Aorta (tissue), 5 donors: ENCODE measurements at regions of chr9 and their contacts with region 1.

Region 1: DNA sequence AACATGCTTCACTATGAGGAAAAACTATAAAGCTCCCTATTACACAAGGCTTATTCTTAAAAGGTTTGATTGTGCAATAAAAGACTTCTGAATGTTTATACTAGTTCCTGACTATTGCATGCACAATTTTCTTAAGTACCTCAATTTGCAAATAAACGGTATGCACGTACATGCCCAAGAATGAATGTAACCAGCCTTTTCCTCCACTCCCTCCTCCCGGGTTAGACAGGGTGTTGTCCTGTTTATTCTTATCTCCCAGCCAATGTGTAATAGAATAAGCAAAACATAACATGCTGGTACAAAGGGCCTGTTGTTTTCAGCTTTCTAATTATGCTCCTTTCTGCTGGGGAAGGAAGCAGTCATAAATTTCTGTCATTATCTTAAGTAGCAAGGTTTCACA is 79.1 kb downstream of the AOPEP start:
- DNase-seq: no peak
- ATAC-seq: peak; percentile 34
- H3K4me3 ChIP-seq: no peak overlapping the region
- H3K27ac ChIP-seq: peak overlapping the region in 1 of 2 donors; percentile 64
- H3K4me1 ChIP-seq: peaks cover 6 to 15% of the 10 kb centered on the region in 2 donors
- H3K27me3 ChIP-seq: no peaks in the 10 kb centered on the region

Region 2: DNA sequence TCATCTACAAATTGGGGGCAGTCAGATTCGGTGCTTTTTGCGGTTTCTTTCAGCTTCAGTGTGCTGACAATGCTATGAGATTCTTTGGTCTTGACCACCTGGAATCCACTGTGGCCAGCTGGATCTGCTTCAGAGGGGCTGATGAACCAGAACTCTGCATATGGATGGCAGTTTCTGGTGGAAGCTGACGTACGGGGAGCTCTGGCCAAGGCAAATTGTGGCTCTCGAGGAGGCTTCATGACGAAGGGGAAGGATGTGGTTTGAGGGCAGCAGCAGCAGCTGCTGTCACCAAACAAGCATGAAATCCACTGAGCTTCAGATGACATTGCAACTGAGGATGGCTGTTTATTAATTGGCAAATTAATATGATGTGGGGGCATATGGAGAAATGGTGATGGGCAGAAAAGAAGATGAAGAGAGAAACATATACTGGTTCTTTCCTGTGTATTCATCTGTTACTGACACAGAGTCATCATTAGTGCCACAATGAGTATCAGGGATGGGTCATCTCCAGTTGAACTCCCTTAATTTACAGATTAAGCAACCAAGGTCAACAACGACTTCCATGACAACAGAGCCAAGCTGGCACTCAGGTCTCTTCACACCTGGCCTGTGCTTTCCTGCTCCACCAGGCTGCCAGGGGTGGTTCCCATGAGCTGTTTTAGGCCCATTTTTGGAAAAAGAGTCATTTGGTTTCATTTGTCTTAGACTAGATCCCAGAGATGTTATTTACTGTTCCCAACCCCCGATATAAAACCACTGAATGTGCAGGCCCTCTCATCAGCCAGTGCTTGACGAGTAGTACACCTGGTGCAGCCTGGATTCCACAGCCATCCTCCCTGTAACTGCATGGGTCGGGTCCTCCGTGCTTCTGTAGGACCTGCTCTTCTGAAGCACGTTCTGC is 55.6 kb after region 1 on chr9:
- intact Hi-C with region 1: loop called (anchors 5 to 10 kb)
- DNase-seq: peak in 1 of 2 donors; percentile 71
- ATAC-seq: no peak
- H3K4me3 ChIP-seq: no peak overlapping the region
- H3K27ac ChIP-seq: no peak overlapping the region
- H3K4me1 ChIP-seq: peaks cover 0 to 5% of the 10 kb centered on the region in 2 donors
- H3K27me3 ChIP-seq: no peaks in the 10 kb centered on the region

Region 3: GRCh38 chr9:94900222-94901018 is 94.8 kb after region 1 on chr9:
- intact Hi-C with region 1: loop called in 1 of 2 experiments (anchors 5 kb)
- DNase-seq: no peak
- ATAC-seq: peak; percentile 80
- H3K4me3 ChIP-seq: no peak overlapping the region
- H3K27ac ChIP-seq: peak overlapping the region; percentile 86 to 96
- H3K4me1 ChIP-seq: peaks cover 3 to 4% of the 10 kb centered on the region in 2 donors
- H3K27me3 ChIP-seq: no peaks in the 10 kb centered on the region